ENCODE measurements at regions of chr14 and their contacts with region 1.

Region 1: DNA sequence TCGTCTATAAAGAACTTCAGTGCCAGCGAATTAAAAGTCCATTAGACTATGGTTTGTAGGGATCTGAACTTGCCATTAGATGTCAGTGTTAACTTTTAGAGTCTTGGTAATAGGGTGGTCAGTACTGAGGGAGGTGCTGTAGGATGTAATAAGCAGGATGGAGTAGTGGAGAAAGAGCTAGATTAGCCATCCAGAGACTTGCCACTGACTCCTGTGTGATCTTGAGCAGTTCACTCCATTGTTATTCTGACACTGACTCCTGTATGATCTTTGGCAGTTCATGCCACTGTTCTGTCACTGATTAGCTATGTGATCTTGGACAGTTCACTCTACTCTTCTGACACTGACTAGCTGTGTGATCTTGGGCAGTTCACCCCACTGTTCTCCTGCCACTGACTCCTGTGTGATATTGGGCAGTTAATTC is 133.6 kb downstream of the TTLL5 start:
- DNase-seq: peak in 1 of 2 experiments; percentile 11
- H3K4me3 ChIP-seq: no peak overlapping the region
- H3K27ac ChIP-seq: no peak overlapping the region
- H3K4me1 ChIP-seq: no peaks in the 10 kb centered on the region
- H3K27me3 ChIP-seq: no peaks in the 10 kb centered on the region
- CTCF ChIP-seq: peak; percentile 53

Region 2: DNA sequence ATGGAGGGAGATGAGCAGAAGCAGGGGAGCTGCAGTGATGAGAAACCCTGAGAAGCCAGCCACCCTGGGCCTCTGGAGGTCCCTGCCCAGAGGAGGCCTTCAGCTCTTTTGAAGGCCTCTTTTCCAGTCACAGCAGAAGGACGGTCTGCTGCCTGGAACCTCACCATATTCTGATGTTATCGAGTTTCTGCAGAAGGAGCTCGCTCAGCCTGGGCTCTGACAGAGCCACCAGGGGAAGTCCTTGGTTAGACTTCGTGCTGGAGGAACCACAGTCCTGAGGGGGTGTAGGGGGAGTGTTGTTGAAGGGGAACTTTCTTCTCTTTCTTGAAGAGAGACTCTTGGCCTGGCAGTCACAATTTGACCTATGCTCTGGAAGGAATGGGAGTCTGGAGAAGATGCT is 297.4 kb before region 1 on chr14:
- CTCF ChIA-PET with region 1: interaction called, 4 read pairs
- POLR2A ChIA-PET with region 1: no interaction called
- intact Hi-C with region 1: loop called (anchors 10 kb)
- DNase-seq: no peak
- H3K4me3 ChIP-seq: no peak overlapping the region
- H3K27ac ChIP-seq: no peak overlapping the region
- H3K4me1 ChIP-seq: peaks cover 4% of the 10 kb centered on the region; the same call in 1 of the 2 replicates
- H3K27me3 ChIP-seq: no peaks in the 10 kb centered on the region
- CTCF ChIP-seq: no peak

Region 3: DNA sequence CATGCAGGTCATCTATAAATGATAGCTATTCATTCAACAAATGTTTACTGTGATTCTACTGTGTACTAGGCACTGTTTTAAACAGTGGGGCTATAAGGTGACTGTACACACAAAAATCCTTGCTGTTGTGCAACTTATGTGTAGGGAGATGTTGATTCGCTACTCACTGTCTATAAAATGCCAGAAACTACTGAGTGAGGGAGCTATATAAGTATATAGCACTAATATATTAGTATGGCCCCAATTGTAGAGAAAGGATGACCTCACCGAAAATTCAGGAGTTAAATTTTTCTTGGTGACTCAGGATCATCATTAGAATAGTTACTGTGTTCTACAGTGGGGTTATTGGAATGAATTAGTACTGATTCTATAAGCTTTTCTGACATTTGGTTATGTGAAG is 69.7 kb after region 1 on chr14:
- CTCF ChIA-PET with region 1: interaction called, 3 read pairs
- POLR2A ChIA-PET with region 1: no interaction called
- intact Hi-C with region 1: loop called (anchors 1 kb)
- DNase-seq: peak in 1 of 2 experiments; percentile 93
- H3K4me3 ChIP-seq: no peak overlapping the region
- H3K27ac ChIP-seq: peak overlapping the region; percentile 33
- H3K4me1 ChIP-seq: peaks cover 66% of the 10 kb centered on the region
- H3K27me3 ChIP-seq: no peaks in the 10 kb centered on the region
- CTCF ChIP-seq: no peak

Region 4: DNA sequence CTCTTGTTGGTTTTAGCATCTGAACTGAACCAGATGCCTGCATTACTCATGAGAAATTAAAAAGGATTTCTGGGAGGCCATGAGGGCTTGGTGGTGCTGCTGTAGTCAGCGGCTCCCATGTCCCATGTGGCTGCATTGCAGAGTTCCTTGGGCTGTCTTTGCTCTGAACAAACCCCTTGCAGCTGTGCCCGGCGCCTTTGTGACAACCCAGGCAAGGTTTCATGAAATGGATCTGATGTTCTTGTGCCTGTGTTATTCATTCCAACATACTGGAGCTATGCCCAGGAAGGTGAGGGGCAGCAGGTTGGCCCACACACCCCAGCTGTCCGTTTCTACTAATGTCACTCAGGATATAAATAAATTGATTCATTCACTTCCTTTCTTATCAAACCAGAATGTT is 146.4 kb after region 1 on chr14:
- CTCF ChIA-PET with region 1: no interaction called
- POLR2A ChIA-PET with region 1: no interaction called
- intact Hi-C with region 1: no loop called
- DNase-seq: no peak
- H3K4me3 ChIP-seq: no peak overlapping the region
- H3K27ac ChIP-seq: no peak overlapping the region
- H3K4me1 ChIP-seq: no peaks in the 10 kb centered on the region
- H3K27me3 ChIP-seq: no peaks in the 10 kb centered on the region
- CTCF ChIP-seq: no peak

Region 5: GRCh38 chr14:76109087-76109880 is 314.7 kb after region 1 on chr14:
- CTCF ChIA-PET with region 1: no interaction called
- POLR2A ChIA-PET with region 1: interaction called, 12 read pairs
- intact Hi-C with region 1: no loop called
- DNase-seq: peak; percentile 68 to 70
- H3K4me3 ChIP-seq: no peak overlapping the region
- H3K27ac ChIP-seq: no peak overlapping the region
- H3K4me1 ChIP-seq: no peaks in the 10 kb centered on the region
- H3K27me3 ChIP-seq: peaks cover 96% of the 10 kb centered on the region
- CTCF ChIP-seq: no peak

Region 6: DNA sequence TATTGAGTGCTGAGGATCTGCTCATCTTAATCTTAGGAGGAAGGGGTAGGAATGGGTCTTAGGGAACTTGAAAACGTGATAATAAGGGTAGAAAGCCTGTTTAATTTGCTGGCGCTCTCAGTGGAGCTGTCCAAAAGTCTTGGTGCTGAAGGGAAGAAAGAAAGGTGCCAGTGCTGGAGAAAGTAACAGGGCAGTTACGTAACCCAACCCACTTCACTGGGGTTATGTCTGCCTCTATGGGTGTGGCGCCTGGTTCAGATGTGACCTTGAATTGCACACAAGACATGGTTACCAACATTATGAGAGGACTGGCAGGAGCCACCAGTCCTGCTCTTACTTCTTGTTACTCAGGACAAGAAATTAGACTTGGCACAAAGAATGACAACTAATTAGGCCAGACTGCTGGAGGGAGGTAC is 338.5 kb after region 1 on chr14:
- CTCF ChIA-PET with region 1: no interaction called
- POLR2A ChIA-PET with region 1: no interaction called
- intact Hi-C with region 1: no loop called
- DNase-seq: peak in 1 of 2 experiments; percentile 30
- H3K4me3 ChIP-seq: no peak overlapping the region
- H3K27ac ChIP-seq: no peak overlapping the region
- H3K4me1 ChIP-seq: no peaks in the 10 kb centered on the region
- H3K27me3 ChIP-seq: peaks cover 97% of the 10 kb centered on the region
- CTCF ChIP-seq: no peak

Region 7: GRCh38 chr14:76647697-76648298 is 853.2 kb after region 1 on chr14:
- CTCF ChIA-PET with region 1: no interaction called
- POLR2A ChIA-PET with region 1: no interaction called
- intact Hi-C with region 1: loop called (anchors 10 kb)
- DNase-seq: peak; percentile 47 to 52
- H3K4me3 ChIP-seq: no peak overlapping the region
- H3K27ac ChIP-seq: no peak overlapping the region
- H3K4me1 ChIP-seq: no peaks in the 10 kb centered on the region
- H3K27me3 ChIP-seq: peaks cover 89% of the 10 kb centered on the region
- CTCF ChIP-seq: peak; percentile 95